ENCODE measurements at regions of chr11 and their contacts with region 1.

Region 1: DNA sequence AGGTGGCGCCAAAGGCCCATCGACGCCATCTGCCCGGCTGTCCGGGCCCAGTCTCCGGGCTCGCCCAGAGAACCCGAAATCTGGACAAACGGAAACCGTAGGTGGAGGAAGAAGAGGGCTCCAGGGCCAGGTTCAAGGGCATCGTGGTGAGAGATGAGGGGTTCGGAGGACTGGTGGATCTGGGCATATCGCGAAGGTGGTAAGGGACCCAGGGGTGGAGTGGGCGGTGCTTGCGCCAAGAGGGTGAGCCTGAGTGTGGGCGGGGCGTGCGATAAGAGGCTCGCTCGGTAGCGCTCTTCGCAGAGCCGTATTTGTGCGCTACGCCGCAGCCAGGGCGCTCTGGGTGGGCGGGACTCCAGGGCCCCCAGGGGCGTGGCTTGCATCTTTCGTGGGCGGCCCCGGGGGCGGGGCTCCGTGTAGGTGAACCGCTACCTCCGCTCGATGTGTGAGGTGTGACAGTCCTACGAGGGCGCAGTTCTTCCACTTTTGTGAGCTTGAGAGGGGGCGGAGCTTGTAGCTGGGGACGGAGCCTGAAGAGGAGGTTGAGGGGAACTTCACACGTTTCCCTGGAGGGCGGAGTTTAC is 4.8 kb downstream of the CD248 start:
- DNase-seq: peak; percentile 78 to 85 (median 83)
- H3K4me3 ChIP-seq: peak overlapping the region; percentile 40 to 90 (median 69)
- H3K4me3 Mint-ChIP-seq: peak overlapping the region; percentile 92 to 98
- H3K27ac ChIP-seq: peak overlapping the region; percentile 85 to 90
- H3K27ac Mint-ChIP-seq: peak overlapping the region; percentile 96 to 99 (median 97)
- H3K4me1 ChIP-seq: peaks cover 32 to 42% of the 10 kb centered on the region in 2 donors
- H3K4me1 Mint-ChIP-seq: peaks cover 25% of the 10 kb centered on the region
- H3K27me3 ChIP-seq: no peaks in the 10 kb centered on the region
- H3K27me3 Mint-ChIP-seq: peaks cover 8 to 17% (median 13%) of the 10 kb centered on the region in 3 donors
- CTCF ChIP-seq: peak; percentile 98

Region 2: DNA sequence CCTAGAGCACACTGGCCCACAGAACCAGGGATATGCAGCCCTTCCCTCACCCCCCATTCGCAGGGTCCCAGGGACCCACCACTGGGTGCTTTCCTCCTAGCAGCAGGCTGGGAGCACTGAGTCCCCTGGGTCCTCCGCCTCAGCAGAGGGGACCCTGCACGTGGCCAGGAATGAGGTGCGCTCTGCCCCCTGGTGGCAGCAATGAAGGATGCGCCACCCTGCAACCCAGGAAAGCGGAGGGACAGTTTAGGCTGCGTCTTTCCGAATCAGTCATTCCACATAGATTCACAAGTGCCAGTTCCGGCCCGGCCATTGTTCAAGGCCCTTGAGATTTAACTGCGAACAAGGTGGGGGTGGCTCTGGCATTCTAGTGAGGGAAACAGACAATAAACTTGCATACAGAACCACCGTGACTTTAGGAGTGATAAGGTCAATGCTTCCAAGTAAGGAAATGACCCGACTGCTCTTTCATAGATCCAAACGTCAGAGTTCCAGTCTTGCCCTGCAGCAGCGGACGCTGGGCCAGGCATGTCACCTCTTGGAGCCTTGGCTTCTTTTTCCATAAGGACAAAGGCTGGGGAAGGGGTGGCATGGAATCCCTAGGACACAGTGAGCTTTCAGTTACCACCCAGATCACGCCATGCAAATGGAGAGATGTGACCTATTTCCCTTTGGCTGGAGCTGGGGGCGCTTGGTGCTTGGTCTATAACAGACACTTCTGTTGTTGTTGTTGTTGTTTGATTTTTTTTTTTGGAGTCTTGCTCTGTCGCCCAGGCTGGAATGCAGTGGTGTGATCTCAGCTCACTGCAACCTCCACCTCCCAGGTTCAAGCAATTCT is 16.5 kb after region 1 on chr11:
- intact Hi-C with region 1: loop called (anchors 1 kb)
- DNase-seq: peak; percentile 74 to 78 (median 77)
- H3K4me3 ChIP-seq: peak overlapping the region in 1 of 3 experiments; percentile 39
- H3K4me3 Mint-ChIP-seq: peak overlapping the region; percentile 45 to 80
- H3K27ac ChIP-seq: no peak overlapping the region
- H3K27ac Mint-ChIP-seq: peak overlapping the region in 2 of 7 donors; percentile 4 to 35
- H3K4me1 ChIP-seq: peaks cover 7 to 11% of the 10 kb centered on the region in 2 donors
- H3K4me1 Mint-ChIP-seq: peaks cover 16% of the 10 kb centered on the region
- H3K27me3 ChIP-seq: no peaks in the 10 kb centered on the region
- H3K27me3 Mint-ChIP-seq: peaks cover 0 to 3% (median 2%) of the 10 kb centered on the region in 3 donors
- CTCF ChIP-seq: peak; percentile 98

Region 3: DNA sequence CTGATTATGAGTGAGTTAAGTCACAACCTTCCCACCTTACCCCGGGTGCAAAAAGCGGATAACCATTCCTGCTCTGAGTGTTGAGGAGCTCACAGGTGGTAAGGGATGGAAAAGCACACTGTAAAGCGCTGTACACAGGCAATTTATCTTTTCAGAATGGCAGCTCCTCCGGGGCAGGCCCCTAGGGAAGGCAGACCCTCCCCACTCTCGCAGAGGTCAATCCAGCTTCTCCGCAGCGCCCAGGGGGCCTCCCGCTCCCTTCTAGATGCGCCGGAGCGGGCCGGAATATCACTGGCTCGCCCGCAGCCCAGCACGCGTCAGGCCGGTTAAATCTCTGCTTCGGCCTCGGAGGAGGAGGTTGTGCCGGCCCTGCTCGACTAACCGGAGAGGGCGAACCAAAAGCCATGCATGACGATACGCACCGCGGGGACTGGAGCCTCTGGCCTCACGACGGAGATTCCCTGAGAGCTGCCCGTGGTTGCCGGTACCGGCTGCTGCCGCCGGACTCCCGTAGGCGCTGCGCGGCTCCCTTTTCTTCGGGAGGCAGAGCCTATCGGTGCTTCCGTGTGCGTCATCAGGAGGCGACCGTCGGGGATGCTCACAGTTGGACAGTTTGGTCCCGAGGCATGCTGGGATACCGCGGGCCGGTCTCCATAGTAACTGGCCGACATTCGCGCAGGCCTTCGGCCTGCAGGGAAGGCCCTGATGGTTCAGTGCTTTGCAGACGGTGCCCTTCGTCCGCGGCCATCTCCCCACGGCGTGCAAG is 32.7 kb after region 1 on chr11 and contains the start of gene BRMS1:
- intact Hi-C with region 1: loop called in 1 of 2 experiments (anchors 2 kb)
- DNase-seq: peak; percentile 96 to 98 (median 97)
- H3K4me3 ChIP-seq: peak within 1 kb of the TSS; percentile 57 to 93 (median 64)
- H3K4me3 Mint-ChIP-seq: peak within 1 kb of the TSS; percentile 90 to 96
- H3K27ac ChIP-seq: peak within 1 kb of the TSS; percentile 69 to 94
- H3K27ac Mint-ChIP-seq: peak within 1 kb of the TSS; percentile 92 to 97 (median 95)
- H3K4me1 ChIP-seq: peaks cover 34 to 41% of the 10 kb centered on the region in 2 donors
- H3K4me1 Mint-ChIP-seq: peaks cover 31% of the 10 kb centered on the region
- H3K27me3 ChIP-seq: peaks cover 0 to 9% of the 10 kb centered on the region in 2 donors
- H3K27me3 Mint-ChIP-seq: peaks cover 4 to 21% (median 11%) of the 10 kb centered on the region in 3 donors
- CTCF ChIP-seq: no peak
- polyA plus RNA-seq, gene BRMS1: 49.0 to 65.2 (median 62.0) TPM

Region 4: GRCh38 chr11:66386171-66387069 is 74.4 kb after region 1 on chr11:
- intact Hi-C with region 1: loop called (anchors 1 to 10 kb)
- DNase-seq: peak; percentile 67 to 80 (median 76)
- H3K4me3 ChIP-seq: peak overlapping the region in 1 of 3 experiments; percentile 35
- H3K4me3 Mint-ChIP-seq: peak overlapping the region in 1 of 2 donors; percentile 67
- H3K27ac ChIP-seq: no peak overlapping the region
- H3K27ac Mint-ChIP-seq: peak overlapping the region in 1 of 7 donors; percentile 52
- H3K4me1 ChIP-seq: peaks cover 5 to 6% of the 10 kb centered on the region in 2 donors
- H3K4me1 Mint-ChIP-seq: peaks cover 7% of the 10 kb centered on the region
- H3K27me3 ChIP-seq: peaks cover 0 to 2% of the 10 kb centered on the region in 2 donors
- H3K27me3 Mint-ChIP-seq: peaks cover 8 to 22% (median 12%) of the 10 kb centered on the region in 3 donors
- CTCF ChIP-seq: peak; percentile 87